Left colon (tissue), 2 donors: ENCODE measurements at regions of chr10 and their contacts with region 1.

Region 1: GRCh38 chr10:99620713-99621453 is 644 bp upstream of the SLC25A28 start:
- DNase-seq: peak; percentile 93 to 94
- ATAC-seq: peak; percentile 83

Region 2: GRCh38 chr10:99395750-99396445 is 225.0 kb before region 1 on chr10:
- intact Hi-C with region 1: loop called in 1 of 2 experiments (anchors 10 kb)
- DNase-seq: no peak
- ATAC-seq: peak; percentile 5

Region 3: DNA sequence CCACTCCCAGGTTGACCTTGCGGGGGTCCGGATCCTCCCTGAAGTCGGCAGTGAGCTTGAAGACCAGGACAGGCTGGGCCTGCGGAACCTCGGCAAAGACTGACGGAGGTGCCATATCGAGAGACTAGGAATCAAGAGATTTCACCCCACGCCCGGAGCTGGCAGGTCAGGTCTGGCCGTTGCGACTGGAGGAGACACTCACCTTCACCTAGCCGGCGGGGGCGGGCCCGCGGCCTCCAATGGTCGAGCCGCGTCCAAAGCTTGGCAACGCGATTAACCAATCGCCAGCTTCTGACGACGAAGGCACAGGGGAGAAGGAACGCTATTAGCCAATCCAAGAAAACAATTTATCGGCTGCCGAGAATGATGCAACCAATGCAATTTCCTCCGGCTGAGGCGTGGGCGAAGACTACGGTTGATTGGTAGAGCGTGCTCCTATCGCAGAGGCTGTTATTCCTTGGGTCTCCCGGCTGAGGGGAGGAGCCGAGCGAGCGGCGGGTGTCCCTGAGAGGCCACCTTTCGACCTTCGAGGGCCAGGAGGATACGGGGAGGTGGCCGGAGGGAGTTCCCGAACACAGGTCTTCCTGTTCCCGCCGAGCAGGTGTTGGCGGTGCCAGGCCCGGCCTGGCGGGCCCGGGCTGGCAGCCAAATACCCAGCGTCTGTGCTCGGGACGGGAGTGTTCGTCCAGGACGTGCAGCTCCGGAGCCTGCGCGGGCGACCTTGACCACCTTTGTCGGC is 190.3 kb before region 1 on chr10 and contains the start of gene GOT1:
- intact Hi-C with region 1: loop called (anchors 5 to 10 kb)
- DNase-seq: peak; percentile 95 to 99
- ATAC-seq: peak; percentile 92
- total RNA-seq, gene GOT1: 91.5 to 107 TPM

Region 4: DNA sequence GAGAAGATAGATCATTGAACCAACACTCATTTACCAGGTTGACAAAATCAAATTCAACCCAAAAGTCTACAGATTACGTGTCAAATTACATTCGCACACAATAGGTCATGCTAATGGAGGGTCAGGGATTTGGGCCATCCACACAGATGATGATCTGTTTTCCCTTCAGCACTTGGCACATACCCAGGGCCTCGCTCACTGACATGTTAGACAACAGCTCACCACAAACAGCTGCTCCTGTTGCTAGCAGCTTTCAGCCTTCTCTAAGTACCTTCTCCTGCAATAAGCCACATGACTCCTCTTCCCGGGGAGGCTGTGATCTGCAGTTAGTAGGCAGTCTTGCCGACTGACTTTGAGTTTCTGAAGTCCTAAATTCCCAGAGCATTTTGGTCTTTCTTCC is 69.7 kb before region 1 on chr10:
- intact Hi-C with region 1: loop called in 1 of 2 experiments (anchors 10 kb)
- DNase-seq: peak; percentile 53 to 58
- ATAC-seq: no peak

Region 5: DNA sequence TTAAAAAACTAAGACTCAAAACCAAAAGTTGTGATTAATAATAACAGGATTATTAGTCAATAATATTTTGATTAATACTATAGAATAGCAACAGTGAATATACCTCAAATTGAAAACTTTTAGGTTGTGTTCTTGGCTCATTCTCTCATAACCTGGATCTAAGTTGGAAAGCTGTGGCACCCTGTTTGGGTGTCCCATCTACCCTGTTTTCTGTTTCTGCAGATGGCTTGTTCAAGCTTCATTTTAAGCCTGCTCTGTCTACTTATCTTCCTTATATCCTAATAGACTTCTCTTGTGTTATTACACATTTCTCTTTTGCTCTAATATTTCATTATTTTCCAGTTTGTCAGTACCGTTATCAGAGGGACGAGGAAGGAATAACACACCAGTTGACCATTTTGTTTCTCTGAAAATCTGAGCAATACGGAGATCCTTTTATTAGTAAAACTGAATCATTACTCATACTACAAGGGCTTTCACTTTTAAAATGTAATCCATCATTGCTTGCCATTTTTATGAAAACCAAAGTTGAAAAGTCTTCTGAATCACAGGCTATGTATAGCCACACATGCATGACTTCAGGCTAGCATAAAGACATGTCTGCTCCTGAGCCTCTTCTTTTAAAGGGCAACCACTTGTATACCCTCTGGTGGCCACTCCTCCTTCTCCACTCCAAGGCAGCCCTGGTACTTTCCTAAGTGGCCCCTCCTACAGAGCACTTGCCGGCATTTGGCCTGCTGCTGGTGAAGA is 88.8 kb after region 1 on chr10:
- intact Hi-C with region 1: loop called in 1 of 2 experiments (anchors 10 kb)
- DNase-seq: no peak
- ATAC-seq: peak; percentile 24